Transverse colon (tissue), 4 donors: ENCODE measurements at regions of chr11 and their contacts with region 1.

Region 1: DNA sequence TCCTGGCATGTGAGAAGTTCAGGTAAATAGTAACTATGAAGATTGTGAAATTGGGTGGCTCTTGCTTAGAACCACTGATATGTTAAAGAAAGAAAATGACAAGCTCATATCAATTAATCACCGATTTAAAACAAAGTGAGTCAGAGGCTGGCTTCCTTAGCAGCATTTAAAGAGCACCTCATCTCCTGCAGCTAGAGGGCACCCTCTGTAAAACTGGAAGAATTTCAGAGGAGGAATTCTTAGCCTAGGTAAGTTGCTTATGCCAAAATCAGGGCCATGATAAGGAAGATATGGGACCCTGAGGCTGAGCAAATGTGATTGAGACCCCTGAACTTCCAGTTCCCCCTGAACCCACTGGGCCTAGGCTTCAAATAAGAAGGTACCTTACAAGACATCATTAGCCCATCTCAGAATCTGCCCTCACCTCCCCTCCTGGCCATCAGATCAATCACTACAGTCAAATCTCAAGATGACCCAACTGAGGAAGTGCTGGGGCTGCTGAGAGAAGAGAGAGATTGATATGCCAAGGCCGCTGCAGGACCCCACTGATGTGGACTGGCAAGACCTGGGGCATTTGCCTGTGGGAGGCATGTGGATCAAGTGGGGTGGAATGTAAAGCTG is 8.6 kb upstream of the CD3E start:
- DNase-seq: peak; percentile 34
- H3K4me3 ChIP-seq: no peak overlapping the region
- H3K27ac ChIP-seq: no peak overlapping the region
- H3K4me1 ChIP-seq: no peaks in the 10 kb centered on the region
- H3K27me3 ChIP-seq: peaks cover 4% of the 10 kb centered on the region
- CTCF ChIP-seq: peak; percentile 40 to 55 (median 51)
- EP300 ChIP-seq: no peak
- POLR2A ChIP-seq: no peak

Region 2: GRCh38 chr11:118353084-118353710 is 57.3 kb after region 1 on chr11:
- in situ Hi-C with region 1: loop called in 3 of 4 experiments (anchors 5 to 10 kb)
- intact Hi-C with region 1: no loop called
- DNase-seq: no peak
- H3K4me3 ChIP-seq: no peak overlapping the region
- H3K27ac ChIP-seq: no peak overlapping the region
- H3K4me1 ChIP-seq: no peaks in the 10 kb centered on the region
- H3K27me3 ChIP-seq: peaks cover 30% of the 10 kb centered on the region
- CTCF ChIP-seq: peak; percentile 50 to 66 (median 61)
- EP300 ChIP-seq: no peak
- POLR2A ChIP-seq: no peak